ENCODE measurements at regions of chr5 and their contacts with region 1.

Region 1: DNA sequence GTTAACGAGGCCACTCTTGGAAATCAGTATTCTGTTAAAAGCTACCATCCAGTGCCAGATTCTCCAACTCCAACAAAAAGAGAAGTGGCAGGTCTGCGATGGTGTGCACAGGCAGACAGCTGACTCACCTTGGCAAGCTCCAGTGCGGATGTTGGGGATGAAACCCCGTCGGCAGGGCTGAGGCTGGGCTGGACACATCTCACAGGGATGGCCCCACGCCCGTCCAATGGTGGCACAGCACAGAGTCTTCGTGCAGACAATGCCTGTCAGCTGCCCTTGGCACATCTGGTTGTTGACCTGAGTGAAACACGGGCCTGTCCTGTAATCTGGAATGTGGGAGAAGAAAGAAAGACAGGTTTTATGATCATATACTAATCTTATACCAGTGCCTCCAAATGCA is 73.4 kb downstream of the FBN2 start:
- DNase-seq: no peak
- ATAC-seq: no peak
- H3K4me3 ChIP-seq: no peak overlapping the region
- H3K27ac ChIP-seq: no peak overlapping the region
- H3K4me1 ChIP-seq: no peaks in the 10 kb centered on the region
- H3K27me3 ChIP-seq: no peaks in the 10 kb centered on the region
- CTCF ChIP-seq: no peak

Region 2: DNA sequence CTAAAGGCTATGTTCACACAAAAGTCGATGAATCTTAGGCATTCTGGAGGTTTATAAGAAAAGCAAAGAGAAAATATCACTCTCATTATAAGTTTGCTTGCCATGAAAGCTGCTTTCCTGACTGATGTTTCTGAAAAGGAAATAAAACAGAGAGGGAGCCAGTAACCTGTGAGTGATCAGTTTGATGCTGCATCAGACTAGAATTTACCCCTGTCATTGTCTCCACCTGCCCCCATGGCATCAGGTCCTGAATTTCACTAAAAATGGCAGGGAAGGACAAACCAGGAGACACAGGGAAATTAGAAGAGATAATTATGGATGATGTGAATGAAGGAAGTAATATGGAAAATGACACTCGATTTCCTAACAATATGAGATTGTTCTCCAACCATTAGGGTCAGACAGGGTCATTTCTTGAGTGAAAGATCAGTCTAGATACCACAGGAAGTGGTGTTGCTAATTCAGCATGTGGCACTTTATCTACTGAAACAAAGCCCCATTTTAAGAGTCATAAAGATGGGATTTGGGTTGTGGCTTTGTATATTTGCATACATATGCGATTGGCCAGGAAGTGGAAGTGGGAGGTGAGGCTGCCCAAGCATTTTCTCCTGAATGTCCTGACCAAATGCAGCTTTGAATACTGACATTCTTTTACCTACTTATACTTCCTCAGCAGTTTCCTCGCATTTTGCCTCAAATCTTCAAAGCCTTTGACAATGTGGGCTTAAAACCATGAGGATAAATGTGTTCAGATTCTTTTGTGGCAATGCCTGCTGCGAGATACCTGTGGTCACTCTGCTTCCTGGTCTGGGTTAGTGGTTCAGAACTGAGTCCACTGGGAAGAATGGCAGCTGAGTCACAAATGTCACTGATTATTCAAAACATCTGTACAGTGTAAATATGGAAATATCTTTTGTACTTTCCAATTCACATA is 1144.3 kb before region 1 on chr5:
- CTCF ChIA-PET with region 1: no interaction called
- POLR2A ChIA-PET with region 1: no interaction called
- intact Hi-C with region 1: no loop called
- DNase-seq: no peak
- ATAC-seq: no peak
- H3K4me3 ChIP-seq: no peak overlapping the region
- H3K27ac ChIP-seq: no peak overlapping the region
- H3K4me1 ChIP-seq: no peaks in the 10 kb centered on the region
- H3K27me3 ChIP-seq: peaks cover 48% of the 10 kb centered on the region
- CTCF ChIP-seq: no peak

Region 3: GRCh38 chr5:128424646-128425045 is 40.0 kb before region 1 on chr5:
- CTCF ChIA-PET with region 1: no interaction called
- POLR2A ChIA-PET with region 1: interaction called, 20 read pairs
- intact Hi-C with region 1: no loop called
- DNase-seq: no peak
- ATAC-seq: no peak
- H3K4me3 ChIP-seq: no peak overlapping the region
- H3K27ac ChIP-seq: no peak overlapping the region
- H3K4me1 ChIP-seq: no peaks in the 10 kb centered on the region
- H3K27me3 ChIP-seq: no peaks in the 10 kb centered on the region
- CTCF ChIP-seq: no peak

Region 4: DNA sequence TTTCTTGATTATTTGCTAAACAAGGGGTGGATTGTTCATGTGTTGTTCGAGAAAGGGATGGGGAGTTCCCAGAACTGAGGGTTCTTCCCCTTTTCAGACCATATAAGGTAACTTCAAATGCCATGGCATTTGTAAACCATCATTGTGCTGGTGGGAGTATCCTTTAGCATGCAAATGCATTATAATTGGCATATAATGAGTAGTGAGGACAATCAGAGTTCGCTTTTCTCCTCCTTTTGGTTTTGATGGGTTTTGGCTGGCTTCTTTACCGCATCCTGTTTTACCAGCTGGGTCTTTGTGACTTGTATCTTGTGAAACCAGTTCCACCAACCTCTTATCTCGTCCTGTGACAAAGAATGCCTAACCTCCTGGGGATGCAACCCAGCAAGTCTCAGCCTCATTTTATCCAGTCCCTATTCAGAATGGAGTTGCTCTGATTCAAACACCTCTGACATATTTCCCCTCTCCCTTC is 82.1 kb after region 1 on chr5:
- CTCF ChIA-PET with region 1: no interaction called
- POLR2A ChIA-PET with region 1: no interaction called
- intact Hi-C with region 1: no loop called
- DNase-seq: peak; percentile 82
- ATAC-seq: peak; percentile 78
- H3K4me3 ChIP-seq: no peak overlapping the region
- H3K27ac ChIP-seq: peak overlapping the region; percentile 30
- H3K4me1 ChIP-seq: peaks cover 15% of the 10 kb centered on the region
- H3K27me3 ChIP-seq: no peaks in the 10 kb centered on the region
- CTCF ChIP-seq: no peak

Region 5: GRCh38 chr5:128695791-128696530 is 231.4 kb after region 1 on chr5:
- CTCF ChIA-PET with region 1: no interaction called
- POLR2A ChIA-PET with region 1: no interaction called
- intact Hi-C with region 1: no loop called
- DNase-seq: peak; percentile 26
- ATAC-seq: peak; percentile 27; the same call in 1 of the 2 replicates
- H3K4me3 ChIP-seq: no peak overlapping the region
- H3K27ac ChIP-seq: no peak overlapping the region
- H3K4me1 ChIP-seq: no peaks in the 10 kb centered on the region
- H3K27me3 ChIP-seq: no peaks in the 10 kb centered on the region
- CTCF ChIP-seq: peak; percentile 65

Measured in PC-3 (cell line).